A673 (cell line): ENCODE measurements at regions of chr1 and their contacts with region 1.

Region 1: DNA sequence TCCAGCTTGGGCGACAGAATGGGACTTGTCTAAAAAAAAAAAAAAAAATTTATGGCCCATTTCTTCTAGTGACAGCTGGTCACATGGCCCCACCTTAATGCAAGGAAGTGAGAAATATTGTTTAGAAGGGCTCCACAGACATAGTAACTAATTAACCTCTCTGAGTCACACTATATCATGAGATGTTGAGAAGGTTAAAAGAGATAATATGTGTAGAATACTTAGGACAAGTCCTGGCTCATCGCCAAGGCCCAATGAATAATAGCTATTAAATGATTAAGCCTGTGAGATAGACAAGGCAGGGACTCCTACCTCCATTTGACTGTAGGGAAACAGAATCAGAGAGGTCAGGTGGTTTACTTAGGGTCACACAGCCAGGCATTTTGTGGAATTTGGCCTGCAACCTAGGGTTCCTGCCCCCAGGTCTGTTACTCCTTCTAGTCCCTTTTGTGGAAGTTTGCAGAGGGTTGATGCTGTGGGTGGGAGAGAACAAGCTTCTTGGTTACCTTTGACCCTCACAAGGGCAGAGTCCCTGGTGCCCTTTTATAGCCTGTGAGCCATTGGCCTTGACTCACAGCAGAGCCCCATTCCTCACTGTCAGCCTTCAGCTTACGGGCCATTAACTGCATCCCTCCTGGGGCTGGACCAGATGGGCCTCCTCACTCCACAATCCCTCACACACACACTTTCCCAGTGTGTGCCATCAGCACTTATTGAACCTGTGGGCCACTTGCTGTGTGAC is 48.5 kb downstream of the OPRD1 start:
- DNase-seq: peak; percentile 54
- H3K4me3 ChIP-seq: no peak overlapping the region
- H3K27ac ChIP-seq: no peak overlapping the region
- H3K4me1 ChIP-seq: no peaks in the 10 kb centered on the region
- H3K27me3 ChIP-seq: no peaks in the 10 kb centered on the region
- CTCF ChIP-seq: no peak

Region 2: DNA sequence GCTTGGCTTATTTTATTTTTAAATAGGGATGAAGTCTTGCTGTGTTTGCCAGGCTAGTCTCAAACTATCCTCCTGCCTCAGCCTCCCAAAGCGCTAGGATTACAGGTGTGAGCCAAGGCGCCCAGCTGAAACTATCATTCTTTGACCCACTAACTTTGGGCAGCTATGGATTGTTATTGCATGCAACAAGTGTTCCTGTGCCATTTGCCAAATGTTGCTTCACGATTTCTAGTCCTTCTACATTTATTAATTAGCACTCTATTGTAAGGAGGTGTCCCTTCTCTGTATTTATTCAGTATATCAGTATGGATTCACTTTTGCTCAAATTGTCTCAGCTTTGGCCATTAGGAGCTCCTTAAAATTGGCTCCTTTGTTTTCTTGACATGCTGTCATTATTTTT is 87.4 kb before region 1 on chr1:
- CTCF ChIA-PET with region 1: no interaction called
- POLR2A ChIA-PET with region 1: no interaction called
- intact Hi-C with region 1: no loop called
- DNase-seq: no peak
- H3K4me3 ChIP-seq: no peak overlapping the region
- H3K27ac ChIP-seq: no peak overlapping the region
- H3K4me1 ChIP-seq: no peaks in the 10 kb centered on the region
- H3K27me3 ChIP-seq: no peaks in the 10 kb centered on the region
- CTCF ChIP-seq: no peak

Region 3: GRCh38 chr1:28789412-28789811 is 71.1 kb before region 1 on chr1:
- CTCF ChIA-PET with region 1: no interaction called
- POLR2A ChIA-PET with region 1: no interaction called
- intact Hi-C with region 1: loop called (anchors 5 kb)
- DNase-seq: no peak
- H3K4me3 ChIP-seq: no peak overlapping the region
- H3K27ac ChIP-seq: no peak overlapping the region
- H3K4me1 ChIP-seq: no peaks in the 10 kb centered on the region
- H3K27me3 ChIP-seq: no peaks in the 10 kb centered on the region
- CTCF ChIP-seq: no peak